ENCODE measurements at regions of chr13 and their contacts with region 1.

Region 1: DNA sequence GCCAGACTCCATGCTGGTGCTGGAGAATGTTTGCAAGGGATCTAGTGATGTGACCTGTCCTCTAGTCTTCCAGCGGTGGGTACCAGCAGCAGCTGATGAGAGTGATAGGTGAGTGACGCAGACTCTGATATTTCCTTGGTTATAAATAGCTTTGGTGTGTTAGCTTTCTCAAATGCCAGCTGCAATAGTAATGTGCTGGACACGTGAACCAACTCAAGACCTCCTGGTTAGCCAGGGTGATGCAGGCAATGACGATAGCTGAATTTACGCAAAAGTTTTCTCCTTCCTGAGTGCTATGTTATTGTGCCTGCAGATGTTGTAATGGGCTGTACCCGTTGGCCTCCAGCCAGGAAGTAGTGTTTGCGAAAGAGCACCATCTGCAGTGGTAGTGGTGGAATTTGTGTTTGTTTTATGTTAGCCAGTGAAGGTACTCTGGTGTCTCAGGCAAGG is 129.5 kb downstream of the CYSLTR2 start:
- DNase-seq: peak; percentile 99
- H3K4me3 ChIP-seq: no peak overlapping the region
- H3K27ac ChIP-seq: peak overlapping the region; percentile 97
- H3K27me3 ChIP-seq: no peaks in the 10 kb centered on the region
- CTCF ChIP-seq: 0 out of 2 replicates have a peak, but pooled peaks have one; percentile 15

Region 2: DNA sequence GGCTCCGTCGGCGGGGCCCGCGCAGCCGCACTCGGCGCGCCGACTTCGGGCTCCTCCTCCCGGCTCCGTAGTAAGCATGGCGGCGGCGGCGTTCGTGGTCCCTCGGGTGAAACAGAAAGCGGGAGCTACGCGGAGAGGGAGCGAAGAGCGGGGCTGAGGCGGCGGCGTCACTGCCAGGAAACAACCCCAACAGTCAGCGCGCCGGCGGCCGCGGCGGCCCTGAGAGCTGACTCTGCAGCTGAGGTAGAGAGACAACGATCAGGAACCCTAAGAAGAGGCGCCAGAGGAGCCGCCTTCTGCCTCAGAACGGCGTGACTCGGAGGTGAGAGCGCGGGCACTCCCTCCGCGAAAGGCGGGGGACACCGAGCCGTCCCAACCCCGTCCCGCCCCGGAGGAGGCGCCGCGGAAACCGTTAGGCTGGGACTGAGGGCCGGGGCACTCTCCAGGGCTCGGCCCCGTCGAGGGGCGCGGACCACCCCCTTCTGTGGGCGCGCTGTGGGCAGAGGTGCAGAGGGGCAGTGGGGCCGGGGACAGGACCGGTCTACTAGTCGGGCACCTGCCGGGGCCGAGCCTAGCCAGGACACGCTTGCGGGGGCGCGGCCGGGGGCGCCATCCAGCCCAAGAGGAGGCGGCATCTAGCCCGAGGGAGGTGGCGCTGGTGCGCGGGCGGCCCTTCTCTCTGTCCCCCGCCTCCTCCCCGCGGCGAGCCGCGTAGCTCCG is 192.8 kb after region 1 on chr13 and contains the start of gene FNDC3A:
- CTCF ChIA-PET with region 1: no interaction called
- POLR2A ChIA-PET with region 1: interaction called, 10 read pairs
- DNase-seq: peak; percentile 39
- H3K4me3 ChIP-seq: peak within 1 kb of the TSS; percentile 85
- H3K27ac ChIP-seq: peak within 1 kb of the TSS; percentile 96
- H3K27me3 ChIP-seq: no peaks in the 10 kb centered on the region
- CTCF ChIP-seq: no peak
- polyA plus RNA-seq, gene FNDC3A: 61.5 and 82.1 TPM in 2 replicates

Region 3: GRCh38 chr13:49746111-49746510 is 962.9 kb after region 1 on chr13:
- CTCF ChIA-PET with region 1: no interaction called
- POLR2A ChIA-PET with region 1: no interaction called
- DNase-seq: no peak
- H3K4me3 ChIP-seq: no peak overlapping the region
- H3K27ac ChIP-seq: no peak overlapping the region
- H3K27me3 ChIP-seq: no peaks in the 10 kb centered on the region
- CTCF ChIP-seq: no peak